Psoas muscle (tissue), 8 donors: ENCODE measurements at regions of chr7 and their contacts with region 1.

Region 1: DNA sequence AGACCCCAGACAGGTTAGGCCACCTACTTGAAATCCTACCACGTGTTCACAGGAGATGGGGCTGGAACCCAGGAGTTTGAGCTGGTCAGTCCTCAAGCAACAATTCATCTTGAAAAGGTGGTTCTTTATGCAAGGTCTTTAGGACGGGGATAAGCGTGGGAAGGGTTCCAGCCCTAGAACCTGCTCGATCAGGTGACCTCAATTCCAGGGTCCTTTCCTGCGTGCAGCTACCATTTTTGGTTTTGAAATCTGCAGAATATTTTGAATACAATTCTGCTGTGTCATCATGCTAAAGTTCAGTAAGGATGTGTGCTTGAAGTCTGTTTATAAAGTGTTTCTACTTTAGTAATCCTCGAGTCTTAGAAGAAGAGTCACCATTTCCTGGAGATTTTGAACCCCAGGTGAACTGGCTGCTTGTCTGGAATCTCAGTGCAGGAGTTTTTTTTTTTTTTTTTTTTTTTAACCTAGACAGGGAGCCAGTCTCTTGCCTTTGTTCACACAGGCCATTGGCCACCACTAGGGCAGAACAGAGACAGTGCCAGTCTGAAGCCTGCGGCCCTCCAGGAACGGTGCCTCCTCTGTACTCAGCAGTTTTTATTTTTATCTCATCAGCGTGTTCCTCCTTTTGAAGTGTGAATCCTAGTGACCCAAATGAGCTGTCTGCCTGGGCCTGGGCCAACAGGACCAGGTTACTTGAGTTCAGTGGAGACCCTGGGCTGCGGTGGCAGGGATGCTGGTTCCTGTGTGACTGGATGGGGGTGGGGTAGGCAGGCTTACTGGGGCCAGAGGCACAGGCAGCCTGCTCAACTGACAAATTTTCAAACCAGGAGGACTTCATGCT is 54.6 kb downstream of the EEPD1 start:
- DNase-seq: peak; percentile 79 to 90
- ATAC-seq: peak; percentile 79 to 82 (median 80)
- H3K4me3 ChIP-seq: no peak overlapping the region
- H3K27ac ChIP-seq: peak overlapping the region; percentile 79
- H3K4me1 ChIP-seq: peaks cover 89% of the 10 kb centered on the region
- H3K27me3 ChIP-seq: no peaks in the 10 kb centered on the region
- CTCF ChIP-seq: peak; percentile 30

Region 2: DNA sequence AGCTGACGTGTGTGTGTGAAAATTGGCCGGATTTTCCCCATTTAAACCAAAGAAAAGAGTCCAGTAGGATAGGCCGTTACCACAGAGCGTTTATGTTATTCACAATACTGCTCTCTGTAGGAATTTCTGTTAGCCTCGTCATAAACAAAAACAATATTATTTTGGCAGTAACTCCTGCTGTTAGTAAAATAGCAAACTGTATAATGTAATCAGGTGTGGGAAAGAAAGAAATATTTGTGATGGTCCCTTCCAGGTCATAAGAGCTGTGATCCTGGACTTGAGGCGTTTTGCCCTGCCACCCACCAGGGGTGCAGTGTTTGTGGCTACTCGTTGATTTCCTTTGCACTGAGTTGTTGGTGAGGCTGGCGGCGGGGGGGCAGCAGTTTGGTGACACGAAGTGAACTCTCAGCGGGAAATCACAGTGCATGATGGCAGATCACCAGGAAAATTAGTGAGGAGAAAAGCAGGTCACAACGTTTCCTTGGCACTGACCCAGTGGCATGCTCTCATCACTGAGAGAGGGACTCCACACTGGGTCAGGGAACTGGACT is 51.8 kb before region 1 on chr7:
- intact Hi-C with region 1: loop called (anchors 5 kb)
- DNase-seq: peak; percentile 56 to 89
- ATAC-seq: peak in 2 of 4 donors; percentile 14 to 33
- H3K4me3 ChIP-seq: peak overlapping the region; percentile 93
- H3K27ac ChIP-seq: peak overlapping the region; percentile 95
- H3K4me1 ChIP-seq: peaks cover 70% of the 10 kb centered on the region
- H3K27me3 ChIP-seq: no peaks in the 10 kb centered on the region
- CTCF ChIP-seq: no peak